B cell (primary cell): ENCODE measurements at regions of chr11 and their contacts with region 1.

Region 1: GRCh38 chr11:10969387-10969786 is 111.5 kb upstream of the ZBED5 start:
- DNase-seq: no peak
- ATAC-seq: no peak
- H3K4me3 ChIP-seq: no peak overlapping the region
- H3K4me3 Mint-ChIP-seq: no peak overlapping the region
- H3K27ac ChIP-seq: no peak overlapping the region
- H3K27ac Mint-ChIP-seq: no peak overlapping the region
- H3K4me1 ChIP-seq: peaks cover 7 to 8% of the 10 kb centered on the region in 2 donors
- H3K4me1 Mint-ChIP-seq: peaks cover 10% of the 10 kb centered on the region
- H3K27me3 ChIP-seq: no peaks in the 10 kb centered on the region
- H3K27me3 Mint-ChIP-seq: peaks cover 4% of the 10 kb centered on the region
- CTCF ChIP-seq: no peak

Region 2: GRCh38 chr11:11000579-11001283 is 31.3 kb after region 1 on chr11:
- CTCF ChIA-PET with region 1: no interaction called
- POLR2A ChIA-PET with region 1: no interaction called
- intact Hi-C with region 1: loop called (anchors 5 kb)
- DNase-seq: no peak
- ATAC-seq: no peak
- H3K4me3 ChIP-seq: no peak overlapping the region
- H3K4me3 Mint-ChIP-seq: no peak overlapping the region
- H3K27ac ChIP-seq: no peak overlapping the region
- H3K27ac Mint-ChIP-seq: no peak overlapping the region
- H3K4me1 ChIP-seq: peaks cover 4 to 6% of the 10 kb centered on the region in 2 donors
- H3K4me1 Mint-ChIP-seq: peaks cover 15% of the 10 kb centered on the region
- H3K27me3 ChIP-seq: peaks cover 0 to 17% (median 7%) of the 10 kb centered on the region in 4 experiments
- H3K27me3 Mint-ChIP-seq: peaks cover 31% of the 10 kb centered on the region
- CTCF ChIP-seq: no peak